ENCODE measurements at regions of chr7 and their contacts with region 1.

Region 1: GRCh38 chr7:8217200-8218068 is 44.5 kb downstream of the ICA1 start:
- DNase-seq: peak; percentile 59
- H3K4me3 Mint-ChIP-seq: no peak overlapping the region
- H3K27ac Mint-ChIP-seq: no peak overlapping the region
- H3K4me1 Mint-ChIP-seq: no peaks in the 10 kb centered on the region
- H3K27me3 Mint-ChIP-seq: no peaks in the 10 kb centered on the region
- CTCF ChIP-seq: peak; percentile 66

Region 2: DNA sequence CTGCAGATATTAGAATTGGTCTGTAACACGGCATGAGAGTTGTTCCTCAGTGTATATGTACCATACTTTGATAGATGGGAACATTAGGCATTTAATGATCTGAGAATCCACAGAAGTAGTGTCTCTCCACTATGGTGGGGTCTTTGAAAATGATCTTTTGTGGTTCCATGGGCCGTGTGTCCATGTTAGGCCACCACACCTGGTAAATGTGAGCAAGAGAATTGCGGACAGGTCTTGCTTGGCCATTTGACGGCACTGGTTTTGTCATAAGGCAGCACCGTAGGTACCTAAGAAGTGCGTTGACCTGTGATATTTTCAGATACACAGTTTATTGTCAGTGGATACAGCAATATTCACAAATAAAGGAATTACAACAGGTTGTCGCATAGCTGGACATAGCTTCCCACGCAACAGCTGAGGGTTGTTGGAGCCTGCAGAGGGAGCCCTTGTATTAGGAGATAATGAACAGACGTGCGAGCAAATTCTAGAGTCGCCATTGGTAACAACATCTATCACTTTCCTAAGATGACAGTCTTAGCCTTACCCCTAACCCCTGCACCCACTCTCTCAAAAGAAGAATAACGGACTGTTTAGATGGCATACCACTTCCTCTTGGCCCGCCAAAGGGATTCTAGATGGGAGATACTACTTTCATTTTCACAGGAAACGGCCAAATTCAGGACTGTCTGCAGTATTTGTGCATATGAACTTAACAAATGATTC is 793.1 kb before region 1 on chr7:
- CTCF ChIA-PET with region 1: no interaction called
- intact Hi-C with region 1: loop called (anchors 5 kb)
- DNase-seq: peak; percentile 82
- H3K4me3 Mint-ChIP-seq: peak overlapping the region; percentile 51
- H3K27ac Mint-ChIP-seq: no peak overlapping the region
- H3K4me1 Mint-ChIP-seq: peaks cover 8% of the 10 kb centered on the region
- H3K27me3 Mint-ChIP-seq: no peaks in the 10 kb centered on the region
- CTCF ChIP-seq: peak; percentile 92

Region 3: DNA sequence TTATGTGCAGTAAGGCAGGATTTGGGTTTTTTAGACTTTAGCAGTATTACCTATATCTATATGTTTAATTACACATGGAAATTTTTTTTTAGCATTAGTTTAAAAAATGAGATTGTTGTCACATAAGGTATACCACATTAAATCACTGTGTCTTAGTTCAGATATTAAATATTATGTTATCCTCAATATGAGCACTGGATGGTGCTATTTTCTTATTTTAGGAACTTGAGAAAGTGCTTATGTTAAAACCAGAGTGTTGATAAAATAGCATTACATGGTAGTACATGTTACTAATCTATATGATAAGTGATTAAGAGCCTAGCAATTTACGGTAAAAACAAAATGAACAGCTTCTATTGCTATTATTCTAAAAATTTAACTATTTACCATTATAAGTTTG is 622.0 kb before region 1 on chr7:
- CTCF ChIA-PET with region 1: no interaction called
- intact Hi-C with region 1: loop called (anchors 1 kb)
- DNase-seq: no peak
- H3K4me3 Mint-ChIP-seq: no peak overlapping the region
- H3K27ac Mint-ChIP-seq: no peak overlapping the region
- H3K4me1 Mint-ChIP-seq: no peaks in the 10 kb centered on the region
- H3K27me3 Mint-ChIP-seq: no peaks in the 10 kb centered on the region
- CTCF ChIP-seq: peak; percentile 46

Region 4: GRCh38 chr7:7653593-7654187 is 563.7 kb before region 1 on chr7:
- CTCF ChIA-PET with region 1: no interaction called
- intact Hi-C with region 1: loop called (anchors 10 kb)
- DNase-seq: peak; percentile 58
- H3K4me3 Mint-ChIP-seq: no peak overlapping the region
- H3K27ac Mint-ChIP-seq: no peak overlapping the region
- H3K4me1 Mint-ChIP-seq: peaks cover 7% of the 10 kb centered on the region
- H3K27me3 Mint-ChIP-seq: no peaks in the 10 kb centered on the region
- CTCF ChIP-seq: peak; percentile 91

Region 5: DNA sequence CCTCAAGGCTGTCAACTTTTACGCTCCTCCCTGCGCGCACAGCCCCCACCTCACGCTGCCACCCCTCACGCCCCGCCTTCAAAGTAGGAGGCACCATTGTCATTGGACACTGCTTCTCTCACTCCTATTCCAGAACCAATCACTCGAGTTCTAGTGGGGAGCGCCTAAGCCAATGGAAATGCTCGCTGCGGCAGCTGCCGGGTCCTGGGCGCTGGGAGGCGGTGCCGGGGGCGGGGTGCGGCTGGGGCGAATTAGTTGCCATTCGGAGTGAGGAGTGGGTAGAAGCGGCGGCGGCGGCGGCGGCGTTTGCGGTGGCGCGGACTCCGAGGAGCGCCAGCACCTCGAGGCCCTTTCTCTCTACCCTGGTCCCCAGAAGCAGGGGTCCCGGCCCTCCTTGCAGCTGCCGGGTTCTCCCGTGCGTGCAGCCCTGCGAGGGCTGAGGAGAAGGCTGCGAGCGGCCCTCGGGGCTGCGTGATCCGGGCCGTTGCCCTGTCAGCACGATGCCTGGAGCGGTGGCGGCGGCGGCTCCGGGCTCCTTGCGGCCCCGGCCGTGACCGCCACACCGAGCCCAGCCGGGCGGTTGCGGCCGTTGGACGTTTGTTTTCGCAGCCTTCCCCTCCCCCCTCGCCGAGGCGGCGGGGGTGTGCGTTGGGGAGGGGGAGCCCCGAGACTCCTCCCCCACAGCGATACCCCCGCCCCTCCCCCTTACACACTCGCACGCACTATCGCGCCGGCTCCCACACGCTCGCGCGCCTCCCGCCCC is 248.7 kb before region 1 on chr7 and contains the start of gene GLCCI1:
- CTCF ChIA-PET with region 1: no interaction called
- intact Hi-C with region 1: loop called (anchors 1 kb)
- DNase-seq: peak; percentile 99
- H3K4me3 Mint-ChIP-seq: no peak within 1 kb of the TSS
- H3K27ac Mint-ChIP-seq: peak within 1 kb of the TSS; percentile 52
- H3K4me1 Mint-ChIP-seq: no peaks in the 10 kb centered on the region
- H3K27me3 Mint-ChIP-seq: no peaks in the 10 kb centered on the region
- CTCF ChIP-seq: no peak
- total RNA-seq, gene GLCCI1: 10.1 and 12.9 TPM in 2 replicates

Region 6: DNA sequence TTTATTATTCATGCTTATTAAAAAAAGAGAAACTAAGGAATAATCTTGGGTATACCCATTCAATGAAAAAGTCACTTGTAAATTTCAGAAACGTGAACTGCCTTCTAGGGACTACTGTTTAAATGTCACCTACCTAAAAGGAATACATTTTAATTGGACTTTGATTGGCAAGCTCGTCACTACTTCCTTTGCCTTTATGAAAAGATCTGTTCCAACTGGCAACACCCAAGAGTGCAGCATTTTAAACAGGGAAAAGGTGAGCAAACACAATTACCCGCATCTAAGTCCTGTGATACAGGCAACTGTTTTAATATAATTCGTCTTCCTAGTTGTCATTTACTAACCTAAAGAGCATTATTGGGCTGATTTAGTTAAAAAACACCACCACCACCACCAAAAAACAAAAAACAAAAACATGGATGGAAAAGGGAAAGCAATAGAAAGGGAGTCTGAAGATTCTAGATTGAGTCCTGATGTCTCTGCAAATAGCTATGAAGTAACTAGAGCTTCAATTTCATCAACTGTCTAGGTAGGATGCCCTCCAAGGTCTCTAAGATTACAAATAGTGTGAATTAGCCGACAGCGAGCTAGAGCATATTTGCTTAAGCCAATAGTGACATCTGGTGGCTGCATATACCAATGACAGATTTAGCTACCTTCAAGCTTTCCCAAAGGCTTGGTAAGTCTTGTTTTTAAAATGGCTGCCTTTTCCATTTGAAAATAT is 78.4 kb after region 1 on chr7:
- CTCF ChIA-PET with region 1: interaction called, 5 read pairs
- intact Hi-C with region 1: loop called (anchors 1 kb)
- DNase-seq: peak; percentile 69
- H3K4me3 Mint-ChIP-seq: no peak overlapping the region
- H3K27ac Mint-ChIP-seq: no peak overlapping the region
- H3K4me1 Mint-ChIP-seq: peaks cover 27% of the 10 kb centered on the region
- H3K27me3 Mint-ChIP-seq: no peaks in the 10 kb centered on the region
- CTCF ChIP-seq: peak; percentile 84

Measured in Calu3 (cell line).